ENCODE measurements at regions of chrX and their contacts with region 1.

Region 1: GRCh38 chrX:54182864-54183608 is at the start of gene FAM120C:
- DNase-seq: peak; percentile 23 to 70 (median 65)
- ATAC-seq: peak; percentile 79
- H3K4me3 ChIP-seq: peak within 1 kb of the TSS; percentile 62
- H3K4me3 Mint-ChIP-seq: peak within 1 kb of the TSS; percentile 70 to 92 (median 88)
- H3K27ac ChIP-seq: peak within 1 kb of the TSS; percentile 78
- H3K27ac Mint-ChIP-seq: peak within 1 kb of the TSS; percentile 81 to 91 (median 88)
- H3K4me1 ChIP-seq: peaks cover 22 to 27% of the 10 kb centered on the region in 2 donors
- H3K4me1 Mint-ChIP-seq: peaks cover 30 to 42% (median 39%) of the 10 kb centered on the region in 7 donors
- H3K27me3 ChIP-seq: no peaks in the 10 kb centered on the region
- H3K27me3 Mint-ChIP-seq: no peaks in the 10 kb centered on the region
- total RNA-seq, gene FAM120C: 13.5 to 24.7 (median 17.6) TPM

Region 2: GRCh38 chrX:53422086-53422860 is 760.8 kb before region 1 on chrX and contains the start of gene SMC1A:
- CTCF ChIA-PET with region 1: no interaction called
- POLR2A ChIA-PET with region 1: no interaction called
- intact Hi-C with region 1: loop called (anchors 2 to 5 kb)
- DNase-seq: peak; percentile 80 to 99 (median 98)
- ATAC-seq: peak; percentile 92
- H3K4me3 ChIP-seq: peak within 1 kb of the TSS; percentile 91
- H3K4me3 Mint-ChIP-seq: peak within 1 kb of the TSS; percentile 89 to 100 (median 96)
- H3K27ac ChIP-seq: peak within 1 kb of the TSS; percentile 91
- H3K27ac Mint-ChIP-seq: peak within 1 kb of the TSS; percentile 93 to 100 (median 99)
- H3K4me1 ChIP-seq: peaks cover 10 to 15% of the 10 kb centered on the region in 2 donors
- H3K4me1 Mint-ChIP-seq: peaks cover 12 to 46% (median 30%) of the 10 kb centered on the region in 7 donors
- H3K27me3 ChIP-seq: no peaks in the 10 kb centered on the region
- H3K27me3 Mint-ChIP-seq: no peaks in the 10 kb centered on the region
- total RNA-seq, gene SMC1A: 53.0 to 108 (median 67.7) TPM

Region 3: GRCh38 chrX:54281676-54282075 is 98.6 kb after region 1 on chrX:
- CTCF ChIA-PET with region 1: no interaction called
- POLR2A ChIA-PET with region 1: no interaction called
- intact Hi-C with region 1: no loop called
- DNase-seq: no peak
- ATAC-seq: no peak
- H3K4me3 ChIP-seq: no peak overlapping the region
- H3K4me3 Mint-ChIP-seq: no peak overlapping the region
- H3K27ac ChIP-seq: no peak overlapping the region
- H3K27ac Mint-ChIP-seq: no peak overlapping the region
- H3K4me1 ChIP-seq: no peaks in the 10 kb centered on the region
- H3K4me1 Mint-ChIP-seq: no peaks in the 10 kb centered on the region
- H3K27me3 ChIP-seq: no peaks in the 10 kb centered on the region
- H3K27me3 Mint-ChIP-seq: no peaks in the 10 kb centered on the region

Region 4: DNA sequence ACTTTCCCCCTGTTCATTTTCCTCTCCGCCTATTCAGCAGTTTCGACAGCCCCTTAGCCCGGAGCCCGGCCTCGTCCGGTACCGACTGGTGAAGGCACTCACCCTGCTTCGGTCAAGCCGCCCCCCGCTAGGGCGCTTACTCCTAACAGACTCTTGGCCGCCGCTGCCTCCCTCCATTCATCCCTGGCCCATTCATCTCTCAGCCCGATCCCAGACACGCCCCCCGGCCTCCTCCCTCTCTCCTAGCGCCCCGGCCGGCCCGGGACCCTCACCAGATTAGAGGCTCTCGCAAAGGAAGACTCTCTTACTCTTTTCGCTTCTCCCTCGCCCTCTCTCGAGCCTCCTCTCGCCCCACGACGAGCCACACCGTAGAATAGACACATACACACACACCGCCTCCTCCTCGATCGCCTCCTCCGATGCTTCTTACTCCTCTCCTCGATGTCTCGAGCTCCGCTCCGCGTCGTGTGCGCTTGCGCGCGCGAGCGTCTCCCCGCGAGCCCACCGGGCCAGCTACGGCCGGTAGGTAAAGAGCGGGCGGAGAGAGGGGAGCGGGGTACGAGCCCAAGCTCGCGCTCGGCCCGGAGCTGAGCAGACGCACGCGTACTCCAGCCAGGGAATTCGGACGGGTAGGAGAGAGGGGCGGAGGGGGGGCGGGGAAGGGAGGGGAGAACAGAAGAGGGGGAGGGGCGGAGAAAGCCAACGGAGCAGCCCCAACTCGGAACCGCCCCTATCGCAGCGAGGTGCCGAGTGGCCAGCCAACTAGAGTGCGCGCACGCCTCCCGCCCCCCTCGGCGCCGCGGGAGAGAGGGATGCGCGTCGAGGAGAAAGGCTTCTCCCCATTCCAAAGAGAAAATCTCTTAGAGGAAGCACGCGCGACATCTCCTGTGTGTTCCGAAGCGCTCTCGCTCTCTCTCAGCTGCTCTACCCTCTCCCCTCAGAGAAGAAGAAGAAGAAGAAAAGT is 174.7 kb after region 1 on chrX and contains the start of gene WNK3:
- CTCF ChIA-PET with region 1: no interaction called
- POLR2A ChIA-PET with region 1: interaction called, 3 read pairs
- intact Hi-C with region 1: loop called in 1 of 2 experiments (anchors 2 kb)
- DNase-seq: peak; percentile 9 to 48 (median 35)
- ATAC-seq: peak; percentile 72
- H3K4me3 ChIP-seq: peak within 1 kb of the TSS; percentile 52
- H3K4me3 Mint-ChIP-seq: peak within 1 kb of the TSS; percentile 75 to 92 (median 88)
- H3K27ac ChIP-seq: no peak within 1 kb of the TSS
- H3K27ac Mint-ChIP-seq: peak within 1 kb of the TSS; percentile 22 to 85 (median 58)
- H3K4me1 ChIP-seq: no peaks in the 10 kb centered on the region
- H3K4me1 Mint-ChIP-seq: peaks cover 7 to 25% (median 20%) of the 10 kb centered on the region in 7 donors
- H3K27me3 ChIP-seq: no peaks in the 10 kb centered on the region
- H3K27me3 Mint-ChIP-seq: peaks cover 0 to 52% (median 21%) of the 10 kb centered on the region in 5 donors
- total RNA-seq, gene WNK3: 0.15 to 0.95 (median 0.67) TPM

Region 5: GRCh38 chrX:54439967-54440871 is 257.2 kb after region 1 on chrX and contains the start of gene TSR2:
- CTCF ChIA-PET with region 1: no interaction called
- POLR2A ChIA-PET with region 1: interaction called, 14 read pairs
- intact Hi-C with region 1: loop called (anchors 1 kb)
- DNase-seq: peak; percentile 50 to 80 (median 74)
- ATAC-seq: peak; percentile 99
- H3K4me3 ChIP-seq: peak within 1 kb of the TSS; percentile 94
- H3K4me3 Mint-ChIP-seq: peak within 1 kb of the TSS; percentile 84 to 100 (median 92)
- H3K27ac ChIP-seq: peak within 1 kb of the TSS; percentile 81
- H3K27ac Mint-ChIP-seq: peak within 1 kb of the TSS; percentile 73 to 94 (median 86)
- H3K4me1 ChIP-seq: peaks cover 8 to 12% of the 10 kb centered on the region in 2 donors
- H3K4me1 Mint-ChIP-seq: peaks cover 15 to 39% (median 26%) of the 10 kb centered on the region in 7 donors
- H3K27me3 ChIP-seq: no peaks in the 10 kb centered on the region
- H3K27me3 Mint-ChIP-seq: no peaks in the 10 kb centered on the region
- total RNA-seq, gene TSR2: 33.6 to 43.3 (median 40.5) TPM

Region 6: GRCh38 chrX:54529552-54530357 is 346.7 kb after region 1 on chrX and contains the start of gene GNL3L:
- CTCF ChIA-PET with region 1: no interaction called
- POLR2A ChIA-PET with region 1: interaction called, 10 read pairs
- intact Hi-C with region 1: loop called (anchors 1 kb)
- DNase-seq: peak; percentile 58 to 84 (median 76)
- ATAC-seq: peak; percentile 93
- H3K4me3 ChIP-seq: peak within 1 kb of the TSS; percentile 82
- H3K4me3 Mint-ChIP-seq: peak within 1 kb of the TSS; percentile 87 to 97 (median 94)
- H3K27ac ChIP-seq: peak within 1 kb of the TSS; percentile 82
- H3K27ac Mint-ChIP-seq: peak within 1 kb of the TSS; percentile 87 to 99 (median 93)
- H3K4me1 ChIP-seq: peaks cover 17 to 30% of the 10 kb centered on the region in 2 donors
- H3K4me1 Mint-ChIP-seq: peaks cover 10 to 46% (median 32%) of the 10 kb centered on the region in 7 donors
- H3K27me3 ChIP-seq: no peaks in the 10 kb centered on the region
- H3K27me3 Mint-ChIP-seq: no peaks in the 10 kb centered on the region
- total RNA-seq, gene GNL3L: 32.8 to 55.4 (median 41.8) TPM

Region 7: GRCh38 chrX:54808605-54809483 is 625.8 kb after region 1 on chrX:
- CTCF ChIA-PET with region 1: no interaction called
- POLR2A ChIA-PET with region 1: no interaction called
- intact Hi-C with region 1: loop called (anchors 1 kb)
- DNase-seq: peak; percentile 63 to 90 (median 84)
- ATAC-seq: peak; percentile 84
- H3K4me3 ChIP-seq: peak overlapping the region; percentile 93
- H3K4me3 Mint-ChIP-seq: peak overlapping the region; percentile 90 to 99 (median 96)
- H3K27ac ChIP-seq: peak overlapping the region; percentile 89
- H3K27ac Mint-ChIP-seq: peak overlapping the region; percentile 93 to 98 (median 96)
- H3K4me1 ChIP-seq: no peaks in the 10 kb centered on the region
- H3K4me1 Mint-ChIP-seq: peaks cover 5 to 28% (median 19%) of the 10 kb centered on the region in 7 donors
- H3K27me3 ChIP-seq: no peaks in the 10 kb centered on the region
- H3K27me3 Mint-ChIP-seq: peaks cover 0 to 25% (median 0%) of the 10 kb centered on the region in 5 donors

Region 8: GRCh38 chrX:54921427-54922021 is 738.5 kb after region 1 on chrX:
- CTCF ChIA-PET with region 1: no interaction called
- POLR2A ChIA-PET with region 1: no interaction called
- intact Hi-C with region 1: loop called in 1 of 2 experiments (anchors 2 kb)
- DNase-seq: peak; percentile 18 to 61 (median 34)
- ATAC-seq: peak; percentile 85
- H3K4me3 ChIP-seq: peak overlapping the region; percentile 71
- H3K4me3 Mint-ChIP-seq: peak overlapping the region; percentile 79 to 96 (median 92)
- H3K27ac ChIP-seq: peak overlapping the region; percentile 42
- H3K27ac Mint-ChIP-seq: peak overlapping the region; percentile 12 to 94 (median 84)
- H3K4me1 ChIP-seq: peaks cover 0 to 9% of the 10 kb centered on the region in 2 donors
- H3K4me1 Mint-ChIP-seq: peaks cover 11 to 23% (median 16%) of the 10 kb centered on the region in 7 donors
- H3K27me3 ChIP-seq: no peaks in the 10 kb centered on the region
- H3K27me3 Mint-ChIP-seq: peaks cover 0 to 13% (median 0%) of the 10 kb centered on the region in 5 donors